BJ (cell line): ENCODE measurements at regions of chr3 and their contacts with region 1.

Region 1: GRCh38 chr3:119276680-119277079 is 17.5 kb upstream of the ARHGAP31 start:
- DNase-seq: no peak
- H3K4me3 ChIP-seq: no peak overlapping the region
- H3K27me3 ChIP-seq: no peaks in the 10 kb centered on the region
- CTCF ChIP-seq: no peak

Region 2: DNA sequence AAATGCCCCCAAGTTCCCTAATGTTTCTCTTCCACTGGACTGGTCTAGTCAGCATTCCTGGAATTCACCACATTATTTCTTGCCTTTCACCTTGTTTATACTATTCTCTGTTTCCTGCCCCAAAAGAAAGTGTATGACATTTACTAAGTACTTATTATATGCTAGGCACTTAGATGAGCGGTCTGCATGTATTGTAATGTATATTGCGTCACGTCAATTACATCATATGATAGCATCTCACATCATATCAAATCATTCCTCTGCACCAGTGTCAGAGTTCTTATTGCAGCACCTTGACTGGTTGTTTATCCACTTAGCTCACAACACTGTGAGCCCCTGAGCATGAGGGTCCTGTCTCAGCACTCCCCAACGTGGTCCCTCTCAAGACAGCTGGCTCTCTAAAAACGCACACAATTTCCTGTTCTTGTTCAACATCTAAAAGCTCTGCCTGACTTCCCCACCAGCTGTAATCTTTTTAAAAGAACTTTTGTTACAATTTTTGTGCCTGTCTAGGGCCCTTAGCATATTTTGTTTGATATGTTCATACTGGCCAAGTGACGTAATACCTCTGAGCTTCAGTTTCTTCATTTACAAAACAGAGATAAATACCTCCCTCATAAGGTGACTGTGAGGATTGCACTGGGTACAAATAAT is 76.3 kb after region 1 on chr3:
- CTCF ChIA-PET with region 1: interaction called, 44 read pairs
- POLR2A ChIA-PET with region 1: no interaction called
- DNase-seq: no peak
- H3K4me3 ChIP-seq: no peak overlapping the region
- H3K27me3 ChIP-seq: no peaks in the 10 kb centered on the region
- CTCF ChIP-seq: peak; percentile 43